Mammary epithelial cell (primary cell): ENCODE measurements at regions of chr1 and their contacts with region 1.

Region 1: DNA sequence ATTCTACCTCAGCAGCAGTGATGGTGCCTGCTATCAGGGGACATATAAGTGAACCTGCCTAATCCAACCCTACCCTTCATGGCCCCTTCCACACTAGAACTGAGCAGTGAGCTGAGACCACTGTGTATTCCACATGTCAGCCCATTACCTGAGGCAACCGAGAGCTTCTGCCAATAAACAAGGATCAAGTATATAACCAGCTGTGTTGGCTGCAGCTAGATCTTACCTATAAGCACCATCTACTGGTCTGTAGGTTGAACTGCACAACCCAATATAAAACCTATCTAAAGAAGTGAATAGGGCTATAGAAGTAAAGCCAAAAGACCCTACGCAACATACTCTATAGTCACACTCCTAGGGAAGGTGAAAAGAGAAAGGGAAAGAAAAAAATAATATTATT is 376.9 kb downstream of the HHIPL2 start:
- DNase-seq: peak; percentile 51
- H3K4me3 ChIP-seq: no peak overlapping the region
- H3K27ac ChIP-seq: no peak overlapping the region
- H3K4me1 ChIP-seq: peaks cover 16% of the 10 kb centered on the region
- H3K27me3 ChIP-seq: no peaks in the 10 kb centered on the region
- CTCF ChIP-seq: peak; percentile 71 to 72

Region 2: DNA sequence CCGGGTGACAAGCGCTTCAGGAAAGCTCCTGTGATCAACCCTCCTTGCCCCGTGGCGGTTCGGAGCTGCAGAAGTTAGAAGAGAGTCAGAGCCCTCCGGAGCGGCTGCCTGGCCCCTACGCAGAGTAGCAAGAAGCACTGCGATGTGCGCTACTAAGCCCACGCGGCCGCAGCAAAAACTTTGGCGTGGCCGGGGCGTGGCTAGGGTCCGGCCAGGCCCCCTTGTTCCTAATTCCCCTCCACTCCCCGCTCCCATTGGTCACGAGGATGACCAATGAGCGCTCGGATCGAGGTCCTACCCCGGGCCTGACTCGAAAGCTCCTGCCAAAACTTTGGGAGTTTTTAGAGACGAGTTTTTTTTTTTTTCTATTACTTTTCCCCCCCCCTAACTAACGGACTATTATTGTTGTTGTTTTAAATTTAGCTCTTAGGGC is 1291.9 kb before region 1 on chr1 and contains the start of gene HLX:
- CTCF ChIA-PET with region 1: no interaction called
- dilution Hi-C with region 1: no loop called
- in situ Hi-C with region 1: no loop called
- intact Hi-C with region 1: loop called (anchors 10 kb)
- DNase-seq: peak; percentile 60
- H3K4me3 ChIP-seq: peak within 1 kb of the TSS; percentile 55 to 72 (median 58)
- H3K27ac ChIP-seq: no peak within 1 kb of the TSS
- H3K4me1 ChIP-seq: peaks cover 12% of the 10 kb centered on the region
- H3K27me3 ChIP-seq: peaks cover 45% of the 10 kb centered on the region
- CTCF ChIP-seq: no peak
- total RNA-seq, gene HLX: 0.33 to 0.61 TPM

Region 3: GRCh38 chr1:221478050-221478949 is 692.7 kb before region 1 on chr1:
- CTCF ChIA-PET with region 1: interaction called, 3 read pairs
- dilution Hi-C with region 1: no loop called
- in situ Hi-C with region 1: loop called (anchors 10 to 25 kb)
- intact Hi-C with region 1: loop called (anchors 1 kb)
- DNase-seq: peak; percentile 79
- H3K4me3 ChIP-seq: no peak overlapping the region
- H3K27ac ChIP-seq: no peak overlapping the region
- H3K4me1 ChIP-seq: peaks cover 13% of the 10 kb centered on the region
- H3K27me3 ChIP-seq: no peaks in the 10 kb centered on the region
- CTCF ChIP-seq: peak; percentile 88 to 98

Region 4: GRCh38 chr1:221839796-221840395 is 331.1 kb before region 1 on chr1:
- CTCF ChIA-PET with region 1: no interaction called
- dilution Hi-C with region 1: loop called (anchors 10 kb)
- in situ Hi-C with region 1: no loop called
- intact Hi-C with region 1: loop called (anchors 1 kb)
- DNase-seq: peak; percentile 100
- H3K4me3 ChIP-seq: no peak overlapping the region
- H3K27ac ChIP-seq: peak overlapping the region; percentile 97
- H3K4me1 ChIP-seq: peaks cover 31% of the 10 kb centered on the region
- H3K27me3 ChIP-seq: no peaks in the 10 kb centered on the region
- CTCF ChIP-seq: no peak

Region 5: GRCh38 chr1:221987860-221988520 is 183.0 kb before region 1 on chr1:
- CTCF ChIA-PET with region 1: no interaction called
- dilution Hi-C with region 1: loop called (anchors 10 kb)
- in situ Hi-C with region 1: no loop called
- intact Hi-C with region 1: loop called (anchors 2 kb)
- DNase-seq: peak; percentile 99
- H3K4me3 ChIP-seq: no peak overlapping the region
- H3K27ac ChIP-seq: peak overlapping the region; percentile 99
- H3K4me1 ChIP-seq: peaks cover 65% of the 10 kb centered on the region
- H3K27me3 ChIP-seq: no peaks in the 10 kb centered on the region
- CTCF ChIP-seq: no peak

Region 6: GRCh38 chr1:222182641-222183040 is 11.6 kb after region 1 on chr1:
- CTCF ChIA-PET with region 1: no interaction called
- dilution Hi-C with region 1: no loop called
- in situ Hi-C with region 1: no loop called
- intact Hi-C with region 1: no loop called
- DNase-seq: peak; percentile 75
- H3K4me3 ChIP-seq: no peak overlapping the region
- H3K27ac ChIP-seq: no peak overlapping the region
- H3K4me1 ChIP-seq: no peaks in the 10 kb centered on the region
- H3K27me3 ChIP-seq: no peaks in the 10 kb centered on the region
- CTCF ChIP-seq: no peak

Region 7: DNA sequence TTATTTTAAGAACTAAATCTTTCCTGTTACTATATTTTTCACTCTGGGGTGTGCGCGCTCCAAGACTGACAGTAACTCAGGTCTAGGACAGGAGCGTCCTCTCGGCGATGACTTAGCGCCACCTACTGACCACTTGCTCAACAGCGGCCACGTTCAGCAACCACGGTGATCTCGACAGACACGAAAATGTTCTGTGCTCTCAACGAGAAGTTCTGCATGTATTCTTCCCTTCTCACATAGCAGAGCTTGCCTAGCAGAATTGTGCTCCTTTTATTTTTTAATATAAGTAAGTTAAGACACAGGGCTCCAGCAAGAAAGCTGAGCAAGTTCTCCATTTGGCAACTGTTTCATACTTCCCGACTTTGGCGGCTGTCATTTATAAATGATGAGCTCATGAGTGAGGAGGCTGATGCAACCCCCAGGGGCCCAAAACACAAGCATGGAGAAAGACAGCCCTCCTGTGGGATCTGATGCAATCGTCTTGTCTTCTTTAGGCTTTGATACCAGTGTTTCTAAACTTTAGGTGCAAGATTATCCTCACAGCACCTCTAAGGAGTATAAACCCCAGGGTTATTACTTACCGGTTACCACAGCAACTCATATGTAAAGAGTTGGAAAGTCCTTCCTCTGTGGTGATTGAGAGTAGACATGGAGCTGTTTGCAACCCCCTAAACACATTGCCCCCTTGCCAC is 284.3 kb after region 1 on chr1:
- CTCF ChIA-PET with region 1: interaction called, 9 read pairs
- dilution Hi-C with region 1: no loop called
- in situ Hi-C with region 1: no loop called
- intact Hi-C with region 1: loop called (anchors 1 kb)
- DNase-seq: peak; percentile 81
- H3K4me3 ChIP-seq: peak overlapping the region; percentile 2 to 14 (median 10)
- H3K27ac ChIP-seq: peak overlapping the region; percentile 72
- H3K4me1 ChIP-seq: peaks cover 14% of the 10 kb centered on the region
- H3K27me3 ChIP-seq: no peaks in the 10 kb centered on the region
- CTCF ChIP-seq: peak; percentile 97 to 99